Pancreas (tissue), 10 donors: ENCODE measurements at regions of chr15 and their contacts with region 1.

Region 1: DNA sequence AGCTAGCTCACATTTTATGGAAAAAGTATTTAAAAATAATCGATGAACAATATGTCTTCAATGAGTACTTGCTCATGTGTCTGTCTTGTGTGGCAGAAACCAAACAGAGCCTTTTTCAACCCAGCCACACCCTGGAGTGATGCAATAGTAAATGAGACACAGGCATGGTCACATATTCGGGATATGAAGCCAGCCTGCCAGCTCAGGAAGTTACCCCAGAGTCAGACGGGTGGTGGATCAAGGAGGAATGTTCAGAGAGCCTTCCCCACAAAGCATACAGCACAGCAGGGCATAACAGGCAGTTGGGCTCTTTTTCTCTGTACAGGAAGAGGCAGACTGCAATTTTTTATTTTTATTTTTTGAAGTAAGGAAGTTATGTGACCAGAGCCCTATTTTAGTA is 27.3 kb downstream of the LARP6 start:
- DNase-seq: no peak
- ATAC-seq: peak in 1 of 4 donors; percentile 55
- H3K4me3 ChIP-seq: no peak overlapping the region
- H3K27ac ChIP-seq: no peak overlapping the region
- H3K4me1 ChIP-seq: peaks cover 20 to 26% (median 24%) of the 10 kb centered on the region in 3 donors
- H3K27me3 ChIP-seq: no peaks in the 10 kb centered on the region
- CTCF ChIP-seq: no peak

Region 2: GRCh38 chr15:70875001-70875782 is 48.6 kb after region 1 on chr15:
- intact Hi-C with region 1: loop called in 1 of 3 experiments (anchors 10 kb)
- DNase-seq: no peak
- ATAC-seq: peak in 3 of 4 donors; percentile 38 to 56 (median 53)
- H3K4me3 ChIP-seq: no peak overlapping the region
- H3K27ac ChIP-seq: no peak overlapping the region
- H3K4me1 ChIP-seq: no peaks in the 10 kb centered on the region
- H3K27me3 ChIP-seq: no peaks in the 10 kb centered on the region
- CTCF ChIP-seq: peak in 1 of 4 donors; percentile 9